ENCODE measurements at regions of chrX and their contacts with region 1.

Region 1: DNA sequence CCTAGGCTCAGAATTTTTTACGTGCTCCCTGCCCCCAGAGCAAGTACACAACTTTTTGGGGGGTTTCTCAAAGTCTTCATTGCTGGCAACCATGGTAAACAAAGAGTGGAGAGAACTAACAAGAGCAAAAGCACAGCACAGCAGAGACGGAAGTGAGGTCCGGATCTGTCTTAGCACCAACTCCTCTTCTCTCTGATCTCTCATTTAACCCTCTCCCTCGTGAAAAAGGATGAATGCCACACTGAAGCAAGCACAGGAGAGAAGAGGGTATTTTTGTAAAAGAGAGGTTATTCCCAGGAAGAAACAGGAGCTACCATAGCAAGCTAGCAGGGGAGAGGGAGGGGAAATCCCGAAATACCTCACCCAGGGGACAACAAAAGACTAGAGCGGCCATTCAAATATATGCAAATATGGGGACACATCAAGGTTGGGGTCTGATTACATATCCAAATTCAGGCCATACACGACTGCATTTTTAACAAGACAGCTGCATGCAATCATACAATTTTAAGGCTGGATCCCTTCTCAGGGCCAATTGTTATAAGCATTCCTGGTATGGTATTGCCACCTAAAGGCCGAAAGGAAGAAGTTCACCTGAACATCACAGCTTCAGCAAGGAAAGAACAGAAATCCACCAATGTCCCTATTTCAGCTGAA is 46.6 kb downstream of the CD40LG start:
- DNase-seq: peak; percentile 45
- H3K4me3 Mint-ChIP-seq: peak overlapping the region; percentile 76
- H3K27ac Mint-ChIP-seq: peak overlapping the region; percentile 99
- H3K4me1 Mint-ChIP-seq: peaks cover 73% of the 10 kb centered on the region
- H3K27me3 Mint-ChIP-seq: no peaks in the 10 kb centered on the region

Region 2: GRCh38 chrX:136251041-136251991 is 443.2 kb before region 1 on chrX and contains the start of gene MAP7D3:
- CTCF ChIA-PET with region 1: no interaction called
- intact Hi-C with region 1: loop called (anchors 10 kb)
- DNase-seq: peak; percentile 66
- H3K4me3 Mint-ChIP-seq: peak within 1 kb of the TSS; percentile 83
- H3K27ac Mint-ChIP-seq: peak within 1 kb of the TSS; percentile 56
- H3K4me1 Mint-ChIP-seq: peaks cover 12% of the 10 kb centered on the region
- H3K27me3 Mint-ChIP-seq: no peaks in the 10 kb centered on the region
- total RNA-seq, gene MAP7D3: 10.4 to 12.5 TPM

Region 3: DNA sequence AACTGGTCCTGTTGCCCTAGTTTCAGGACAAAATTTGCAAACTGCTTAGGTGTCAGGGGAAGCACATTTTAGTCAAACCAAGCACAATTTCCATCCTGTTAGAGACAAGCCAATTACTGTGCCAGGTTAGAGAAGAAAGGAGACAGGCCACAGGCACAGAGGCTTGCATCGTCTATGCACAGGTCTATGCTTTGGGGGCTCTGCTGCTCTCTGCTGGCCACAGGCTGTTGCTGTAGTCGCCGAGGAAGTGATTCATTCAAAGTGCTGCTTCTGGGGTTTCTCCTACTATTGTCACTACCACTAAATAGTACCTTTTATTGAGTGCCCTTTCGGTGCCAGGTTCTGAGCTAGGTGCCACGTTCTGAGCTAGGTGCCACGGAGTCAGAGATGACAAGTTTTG is 117.0 kb before region 1 on chrX:
- CTCF ChIA-PET with region 1: interaction called, 24 read pairs
- intact Hi-C with region 1: loop called (anchors 1 kb)
- DNase-seq: peak; percentile 82
- H3K4me3 Mint-ChIP-seq: peak overlapping the region; percentile 4
- H3K27ac Mint-ChIP-seq: peak overlapping the region; percentile 23
- H3K4me1 Mint-ChIP-seq: peaks cover 37% of the 10 kb centered on the region
- H3K27me3 Mint-ChIP-seq: no peaks in the 10 kb centered on the region

Region 4: GRCh38 chrX:136646602-136647239 is 47.8 kb before region 1 on chrX:
- CTCF ChIA-PET with region 1: no interaction called
- intact Hi-C with region 1: loop called (anchors 1 kb)
- DNase-seq: peak; percentile 83
- H3K4me3 Mint-ChIP-seq: peak overlapping the region; percentile 96
- H3K27ac Mint-ChIP-seq: peak overlapping the region; percentile 100
- H3K4me1 Mint-ChIP-seq: peaks cover 54% of the 10 kb centered on the region
- H3K27me3 Mint-ChIP-seq: no peaks in the 10 kb centered on the region

Region 5: GRCh38 chrX:136920001-136920400 is 225.4 kb after region 1 on chrX:
- CTCF ChIA-PET with region 1: interaction called, 3 read pairs
- intact Hi-C with region 1: loop called (anchors 1 kb)
- DNase-seq: no peak
- H3K4me3 Mint-ChIP-seq: no peak overlapping the region
- H3K27ac Mint-ChIP-seq: no peak overlapping the region
- H3K4me1 Mint-ChIP-seq: peaks cover 2% of the 10 kb centered on the region
- H3K27me3 Mint-ChIP-seq: no peaks in the 10 kb centered on the region